Calu3 (cell line): ENCODE measurements at regions of chr12 and their contacts with region 1.

Region 1: GRCh38 chr12:74689071-74689655 is 151.5 kb downstream of the ATXN7L3B start:
- DNase-seq: no peak
- H3K4me3 Mint-ChIP-seq: no peak overlapping the region
- H3K27ac Mint-ChIP-seq: no peak overlapping the region
- H3K4me1 Mint-ChIP-seq: peaks cover 11% of the 10 kb centered on the region
- H3K27me3 Mint-ChIP-seq: no peaks in the 10 kb centered on the region
- CTCF ChIP-seq: peak; percentile 54

Region 2: GRCh38 chr12:74747305-74747704 is 58.1 kb after region 1 on chr12:
- CTCF ChIA-PET with region 1: no interaction called
- intact Hi-C with region 1: loop called (anchors 1 kb)
- DNase-seq: peak; percentile 18
- H3K4me3 Mint-ChIP-seq: no peak overlapping the region
- H3K27ac Mint-ChIP-seq: no peak overlapping the region
- H3K4me1 Mint-ChIP-seq: no peaks in the 10 kb centered on the region
- H3K27me3 Mint-ChIP-seq: no peaks in the 10 kb centered on the region
- CTCF ChIP-seq: no peak

Region 3: DNA sequence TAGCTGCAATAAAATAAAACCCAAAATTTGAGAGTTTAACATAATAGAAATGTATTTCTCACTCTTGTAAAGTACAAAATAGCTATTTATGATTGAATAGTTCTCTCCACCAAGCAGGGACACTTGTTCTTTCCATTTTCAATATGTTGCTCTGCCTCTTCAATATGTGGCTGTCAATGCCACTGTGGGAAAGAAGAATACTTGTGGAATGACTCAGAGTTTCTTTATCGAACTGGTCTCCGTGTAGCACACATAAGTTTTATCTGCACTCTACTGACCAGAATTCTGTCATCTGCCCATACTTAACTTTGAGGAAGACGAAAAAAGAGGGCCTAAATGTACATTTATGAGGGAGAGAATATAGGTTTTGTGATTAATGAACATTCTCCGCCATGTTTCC is 105.4 kb after region 1 on chr12:
- CTCF ChIA-PET with region 1: no interaction called
- intact Hi-C with region 1: loop called (anchors 2 kb)
- DNase-seq: peak; percentile 23
- H3K4me3 Mint-ChIP-seq: no peak overlapping the region
- H3K27ac Mint-ChIP-seq: peak overlapping the region; percentile 14
- H3K4me1 Mint-ChIP-seq: peaks cover 30% of the 10 kb centered on the region
- H3K27me3 Mint-ChIP-seq: no peaks in the 10 kb centered on the region
- CTCF ChIP-seq: no peak

Region 4: GRCh38 chr12:74801625-74802024 is 112.5 kb after region 1 on chr12:
- CTCF ChIA-PET with region 1: no interaction called
- intact Hi-C with region 1: loop called (anchors 2 kb)
- DNase-seq: no peak
- H3K4me3 Mint-ChIP-seq: no peak overlapping the region
- H3K27ac Mint-ChIP-seq: no peak overlapping the region
- H3K4me1 Mint-ChIP-seq: peaks cover 14% of the 10 kb centered on the region
- H3K27me3 Mint-ChIP-seq: no peaks in the 10 kb centered on the region
- CTCF ChIP-seq: no peak

Region 5: GRCh38 chr12:75058228-75058627 is 369.1 kb after region 1 on chr12:
- CTCF ChIA-PET with region 1: no interaction called
- intact Hi-C with region 1: loop called (anchors 1 kb)
- DNase-seq: no peak
- H3K4me3 Mint-ChIP-seq: no peak overlapping the region
- H3K27ac Mint-ChIP-seq: no peak overlapping the region
- H3K4me1 Mint-ChIP-seq: no peaks in the 10 kb centered on the region
- H3K27me3 Mint-ChIP-seq: no peaks in the 10 kb centered on the region
- CTCF ChIP-seq: no peak

Region 6: DNA sequence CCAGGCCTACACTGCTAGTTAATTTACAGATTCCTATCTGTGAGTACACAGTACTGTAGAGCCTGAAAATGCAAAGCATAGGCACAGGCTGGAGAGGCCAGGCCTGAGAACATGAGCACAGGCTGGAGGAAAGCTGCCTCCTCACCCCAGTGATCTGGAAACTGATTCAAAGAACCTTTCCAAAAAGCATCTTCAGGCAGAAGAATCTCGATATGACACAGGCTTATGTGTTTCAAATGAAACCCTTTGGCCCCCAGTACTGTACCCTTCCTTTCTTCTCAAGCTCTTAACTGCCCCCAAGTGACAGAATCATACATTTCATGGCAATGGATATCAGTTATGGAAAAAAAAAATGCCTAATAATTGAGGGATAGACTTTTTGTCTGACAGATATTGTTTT is 398.5 kb after region 1 on chr12:
- CTCF ChIA-PET with region 1: no interaction called
- intact Hi-C with region 1: loop called (anchors 1 kb)
- DNase-seq: peak; percentile 20
- H3K4me3 Mint-ChIP-seq: no peak overlapping the region
- H3K27ac Mint-ChIP-seq: no peak overlapping the region
- H3K4me1 Mint-ChIP-seq: no peaks in the 10 kb centered on the region
- H3K27me3 Mint-ChIP-seq: no peaks in the 10 kb centered on the region
- CTCF ChIP-seq: peak; percentile 30

Region 7: DNA sequence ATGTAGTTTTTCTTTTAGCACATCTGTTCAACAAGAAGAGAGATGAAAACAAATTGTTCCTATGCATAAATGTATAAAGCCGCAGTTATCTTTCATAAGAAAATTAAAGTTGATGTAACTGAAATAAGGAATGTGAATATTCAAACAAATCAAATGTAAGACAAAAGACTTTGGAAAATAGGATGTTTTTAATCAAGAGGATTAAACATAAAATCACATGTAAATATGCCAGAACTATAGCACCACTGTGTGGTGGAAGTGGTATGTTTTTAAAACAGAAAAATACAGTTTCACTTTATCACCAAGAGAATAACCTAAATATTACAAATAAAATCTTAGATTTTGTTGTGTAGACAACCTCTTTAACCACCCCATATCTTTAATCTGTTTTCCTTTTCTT is 600.6 kb after region 1 on chr12:
- CTCF ChIA-PET with region 1: no interaction called
- intact Hi-C with region 1: loop called (anchors 1 kb)
- DNase-seq: no peak
- H3K4me3 Mint-ChIP-seq: no peak overlapping the region
- H3K27ac Mint-ChIP-seq: no peak overlapping the region
- H3K4me1 Mint-ChIP-seq: no peaks in the 10 kb centered on the region
- H3K27me3 Mint-ChIP-seq: no peaks in the 10 kb centered on the region
- CTCF ChIP-seq: no peak